Right cardiac atrium (tissue), 5 donors: ENCODE measurements at regions of chr19 and their contacts with region 1.

Region 1: GRCh38 chr19:49546825-49547565 is 19.2 kb downstream of the RCN3 start:
- DNase-seq: peak in 1 of 3 donors; percentile 76
- ATAC-seq: peak; percentile 77 to 84
- H3K4me3 ChIP-seq: no peak overlapping the region
- H3K27ac ChIP-seq: no peak overlapping the region
- H3K4me1 ChIP-seq: no peaks in the 10 kb centered on the region
- H3K27me3 ChIP-seq: no peaks in the 10 kb centered on the region

Region 2: DNA sequence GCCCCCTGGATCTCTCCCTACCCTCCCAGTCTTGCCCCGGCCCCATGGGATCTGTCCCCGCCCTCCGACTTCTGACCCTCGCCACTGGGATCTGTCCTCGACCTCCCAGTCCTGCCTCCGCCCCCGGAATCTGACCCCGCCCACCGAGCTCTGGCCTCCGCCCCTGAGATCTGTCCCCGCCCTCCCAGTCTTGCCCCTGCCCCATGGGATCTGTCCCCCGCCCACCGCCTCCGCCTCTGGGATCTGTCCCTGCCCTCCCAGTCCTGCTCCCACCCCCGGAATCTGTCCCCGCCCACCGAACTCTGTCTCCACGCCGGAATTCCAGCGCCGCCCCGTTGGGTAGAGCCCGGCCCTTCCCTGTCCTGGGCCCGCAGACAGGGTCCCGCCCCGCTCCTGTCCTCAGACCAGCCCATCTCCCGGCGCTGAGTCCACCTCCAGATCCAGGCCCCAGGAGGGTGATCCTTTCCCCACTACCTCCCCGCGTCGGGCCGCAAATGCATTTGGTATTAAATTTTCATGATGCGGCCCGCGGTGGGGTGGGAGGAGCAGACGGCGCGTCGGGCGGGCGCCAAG is 104.1 kb before region 1 on chr19:
- intact Hi-C with region 1: no loop called
- DNase-seq: peak; percentile 98 to 99 (median 99)
- ATAC-seq: peak; percentile 88 to 90
- H3K4me3 ChIP-seq: peak overlapping the region; percentile 64
- H3K27ac ChIP-seq: peak overlapping the region; percentile 55
- H3K4me1 ChIP-seq: no peaks in the 10 kb centered on the region
- H3K27me3 ChIP-seq: no peaks in the 10 kb centered on the region

Region 3: GRCh38 chr19:49473868-49474544 is 73.0 kb before region 1 on chr19 and contains the start of gene FLT3LG:
- intact Hi-C with region 1: loop called in 2 of 4 experiments (anchors 2 kb)
- DNase-seq: peak; percentile 77 to 91 (median 91)
- ATAC-seq: peak; percentile 72 to 75
- H3K4me3 ChIP-seq: peak within 1 kb of the TSS; percentile 47
- H3K27ac ChIP-seq: peak within 1 kb of the TSS; percentile 71
- H3K4me1 ChIP-seq: no peaks in the 10 kb centered on the region
- H3K27me3 ChIP-seq: no peaks in the 10 kb centered on the region
- total RNA-seq, gene FLT3LG: 4.4 to 6.8 (median 4.9) TPM

Region 4: GRCh38 chr19:49786376-49786820 is 239.4 kb after region 1 on chr19:
- intact Hi-C with region 1: no loop called
- DNase-seq: peak; percentile 50 to 62 (median 57)
- ATAC-seq: peak; percentile 18 to 67
- H3K4me3 ChIP-seq: no peak overlapping the region
- H3K27ac ChIP-seq: peak overlapping the region; percentile 49
- H3K4me1 ChIP-seq: no peaks in the 10 kb centered on the region
- H3K27me3 ChIP-seq: no peaks in the 10 kb centered on the region